ENCODE measurements at regions of chr16 and their contacts with region 1.

Region 1: DNA sequence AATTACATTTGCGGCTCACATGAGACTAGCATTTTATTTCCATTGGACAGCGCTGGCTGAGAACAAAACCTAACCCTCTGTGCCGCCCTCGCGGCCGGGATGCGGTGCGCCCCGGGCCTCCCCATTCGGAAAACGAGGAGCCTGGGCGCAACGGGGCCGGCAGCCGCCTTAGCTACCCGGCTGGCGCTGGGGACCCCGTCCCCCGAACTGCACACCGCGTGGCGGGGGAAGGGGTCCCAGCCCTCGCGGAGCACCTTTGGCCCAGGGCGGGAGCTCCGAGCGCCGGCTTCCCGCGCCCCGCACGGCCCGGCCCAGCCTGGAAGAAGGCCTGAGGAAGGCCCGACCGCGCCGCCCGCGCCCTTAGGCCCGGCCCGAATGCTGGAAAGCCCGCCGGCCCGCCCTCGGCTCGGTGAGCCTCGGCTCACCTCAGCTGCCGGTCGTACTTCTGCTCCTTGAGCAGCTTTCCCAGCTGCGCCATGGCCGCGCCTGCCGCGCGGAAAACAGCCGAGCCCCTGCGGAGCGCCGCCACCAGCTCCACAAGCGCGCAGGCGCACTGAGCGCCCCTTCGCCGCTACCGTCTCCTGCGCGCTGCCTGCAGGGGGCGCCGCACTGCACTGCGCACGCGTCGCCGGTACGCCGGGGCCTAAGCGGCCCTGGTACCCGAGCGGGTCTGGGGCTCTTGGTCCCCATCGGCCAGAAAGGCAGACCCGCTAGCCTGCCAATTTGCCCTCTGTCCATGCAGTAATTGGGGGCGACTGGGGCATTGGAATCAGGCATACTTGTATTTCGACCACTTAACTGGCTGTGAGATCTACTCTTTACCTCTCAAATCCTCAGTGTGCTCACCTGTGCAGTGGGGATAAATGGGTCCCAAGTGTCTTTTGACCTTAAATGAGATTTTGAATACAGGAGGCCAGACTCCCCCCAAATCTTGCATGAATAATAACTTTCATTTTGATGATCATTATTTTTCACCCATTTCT is at the start of gene NAE1:
- DNase-seq: peak; percentile 89 to 94 (median 92)
- H3K4me3 ChIP-seq: peak within 1 kb of the TSS; percentile 60 to 81 (median 76)
- H3K27ac ChIP-seq: peak within 1 kb of the TSS; percentile 40 to 80
- H3K4me1 ChIP-seq: peaks cover 8 to 14% (median 11%) of the 10 kb centered on the region in 4 experiments
- H3K27me3 ChIP-seq: peaks cover 0 to 2% (median 0%) of the 10 kb centered on the region in 5 experiments

Region 2: DNA sequence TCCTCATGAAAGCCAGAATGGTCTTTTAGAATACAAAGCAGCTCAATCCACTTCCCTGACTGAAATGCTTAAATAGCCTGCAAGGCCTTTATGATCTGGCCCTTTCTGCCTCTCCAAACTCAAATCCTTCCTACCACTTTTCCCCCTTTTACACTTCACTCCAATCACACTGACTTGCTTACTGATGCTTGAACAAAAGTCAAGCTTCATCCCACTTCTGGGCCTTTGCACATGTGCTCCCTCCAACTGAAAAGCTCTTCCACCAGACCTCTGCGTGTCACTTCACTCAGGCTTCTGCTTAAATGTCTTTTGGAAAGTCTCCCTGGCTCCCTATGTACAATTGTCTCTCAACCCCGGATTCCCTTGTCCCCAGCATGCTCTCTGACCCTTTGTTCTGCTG is 16.0 kb before region 1 on chr16:
- CTCF ChIA-PET with region 1: interaction called, 13 read pairs
- POLR2A ChIA-PET with region 1: no interaction called
- DNase-seq: no peak
- H3K4me3 ChIP-seq: no peak overlapping the region
- H3K27ac ChIP-seq: no peak overlapping the region
- H3K4me1 ChIP-seq: no peaks in the 10 kb centered on the region
- H3K27me3 ChIP-seq: no peaks in the 10 kb centered on the region

Region 3: DNA sequence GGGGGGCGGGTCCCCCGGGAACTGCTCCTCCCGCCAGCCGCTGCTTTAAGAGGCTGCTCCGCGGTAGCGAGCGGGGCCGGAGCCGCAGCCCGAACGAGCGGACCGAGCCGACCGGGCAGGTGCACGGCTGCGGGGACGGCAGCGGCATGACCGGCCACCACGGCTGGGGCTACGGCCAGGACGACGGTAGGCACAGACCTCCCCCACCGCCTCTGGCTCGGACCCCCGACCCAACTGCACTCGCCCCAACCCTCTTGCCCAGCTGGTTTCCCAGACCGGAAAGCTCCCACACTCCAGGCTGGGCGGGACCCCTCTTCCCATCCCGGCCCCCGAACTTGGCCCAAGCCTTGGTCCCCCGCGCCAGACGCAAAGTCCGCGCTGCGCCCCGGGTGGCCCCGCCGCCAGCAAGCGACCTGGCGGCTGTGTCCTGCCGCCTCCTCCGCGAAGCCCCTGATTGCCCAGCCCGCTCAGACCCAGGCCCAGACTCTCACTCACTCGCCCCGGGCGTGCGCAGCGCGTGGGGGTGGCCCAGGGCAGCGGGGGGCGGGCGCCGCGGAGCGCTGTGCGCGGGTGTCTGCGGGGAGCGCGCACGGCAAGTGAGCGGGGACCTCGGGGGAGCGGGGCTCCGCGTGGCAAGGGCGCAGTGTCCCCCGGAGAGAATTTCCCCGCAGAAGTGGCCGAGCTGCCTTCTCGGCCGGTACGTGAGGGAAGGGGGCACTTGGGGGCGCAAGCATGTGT is 13.8 kb after region 1 on chr16 and contains the start of gene CA7:
- CTCF ChIA-PET with region 1: interaction called, 31 read pairs
- POLR2A ChIA-PET with region 1: interaction called, 3 read pairs
- DNase-seq: peak in 1 of 3 donors; percentile 44
- H3K4me3 ChIP-seq: peak within 1 kb of the TSS in 6 of 7 experiments; percentile 36 to 71 (median 54)
- H3K27ac ChIP-seq: no peak within 1 kb of the TSS
- H3K4me1 ChIP-seq: peaks cover 0 to 14% (median 11%) of the 10 kb centered on the region in 4 experiments
- H3K27me3 ChIP-seq: peaks cover 0 to 43% (median 26%) of the 10 kb centered on the region in 5 experiments

Region 4: GRCh38 chr16:66853261-66854124 is 22.8 kb after region 1 on chr16:
- CTCF ChIA-PET with region 1: interaction called, 10 read pairs
- POLR2A ChIA-PET with region 1: no interaction called
- DNase-seq: peak; percentile 73 to 94 (median 92)
- H3K4me3 ChIP-seq: no peak overlapping the region
- H3K27ac ChIP-seq: no peak overlapping the region
- H3K4me1 ChIP-seq: peaks cover 0 to 13% (median 9%) of the 10 kb centered on the region in 4 experiments
- H3K27me3 ChIP-seq: peaks cover 0 to 9% (median 0%) of the 10 kb centered on the region in 5 experiments

Region 5: DNA sequence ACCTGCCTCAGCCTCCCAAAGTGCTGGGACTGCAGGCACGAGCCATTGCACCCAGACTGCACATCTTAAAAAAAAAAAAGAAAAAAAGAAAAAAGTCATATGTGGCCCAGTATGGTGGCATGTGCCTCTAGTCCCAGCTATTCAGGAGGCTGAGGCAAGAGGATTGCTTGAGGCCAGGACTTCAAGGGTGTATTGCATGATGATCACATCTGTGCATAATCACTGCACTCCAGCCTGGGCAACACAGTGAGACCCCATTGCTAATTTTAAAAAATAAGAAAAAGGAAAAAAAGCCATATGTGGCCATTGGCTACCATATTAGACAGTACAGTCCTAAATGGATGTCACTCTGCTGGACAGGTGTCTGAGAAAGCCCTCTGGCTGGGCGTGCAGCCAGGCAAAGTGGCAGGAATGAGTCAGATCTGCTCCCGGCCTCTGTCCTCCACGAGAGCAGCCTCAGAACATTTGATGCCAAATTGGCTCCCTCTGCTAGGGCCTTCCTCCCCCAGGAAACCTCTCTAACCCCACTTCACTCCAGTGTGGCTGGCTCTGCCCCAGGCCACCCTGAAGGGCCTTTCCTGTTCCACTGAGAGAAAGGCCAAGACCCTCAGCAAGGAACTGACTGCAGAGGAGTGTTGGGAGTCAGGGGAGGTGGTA is 28.2 kb after region 1 on chr16:
- CTCF ChIA-PET with region 1: interaction called, 10 read pairs
- POLR2A ChIA-PET with region 1: no interaction called
- DNase-seq: no peak
- H3K4me3 ChIP-seq: no peak overlapping the region
- H3K27ac ChIP-seq: no peak overlapping the region
- H3K4me1 ChIP-seq: peaks cover 0 to 3% (median under 1%) of the 10 kb centered on the region in 4 experiments
- H3K27me3 ChIP-seq: peaks cover 0 to 6% (median 0%) of the 10 kb centered on the region in 5 experiments

Region 6: GRCh38 chr16:66872943-66873684 is 42.4 kb after region 1 on chr16:
- CTCF ChIA-PET with region 1: interaction called, 91 read pairs
- POLR2A ChIA-PET with region 1: interaction called, 6 read pairs
- DNase-seq: peak; percentile 99 to 100 (median 100)
- H3K4me3 ChIP-seq: peak overlapping the region in 5 of 7 experiments; percentile 32 to 71 (median 45)
- H3K27ac ChIP-seq: peak overlapping the region in 1 of 2 experiments; percentile 40
- H3K4me1 ChIP-seq: peaks cover 0 to 24% (median 14%) of the 10 kb centered on the region in 4 experiments
- H3K27me3 ChIP-seq: no peaks in the 10 kb centered on the region

Region 7: DNA sequence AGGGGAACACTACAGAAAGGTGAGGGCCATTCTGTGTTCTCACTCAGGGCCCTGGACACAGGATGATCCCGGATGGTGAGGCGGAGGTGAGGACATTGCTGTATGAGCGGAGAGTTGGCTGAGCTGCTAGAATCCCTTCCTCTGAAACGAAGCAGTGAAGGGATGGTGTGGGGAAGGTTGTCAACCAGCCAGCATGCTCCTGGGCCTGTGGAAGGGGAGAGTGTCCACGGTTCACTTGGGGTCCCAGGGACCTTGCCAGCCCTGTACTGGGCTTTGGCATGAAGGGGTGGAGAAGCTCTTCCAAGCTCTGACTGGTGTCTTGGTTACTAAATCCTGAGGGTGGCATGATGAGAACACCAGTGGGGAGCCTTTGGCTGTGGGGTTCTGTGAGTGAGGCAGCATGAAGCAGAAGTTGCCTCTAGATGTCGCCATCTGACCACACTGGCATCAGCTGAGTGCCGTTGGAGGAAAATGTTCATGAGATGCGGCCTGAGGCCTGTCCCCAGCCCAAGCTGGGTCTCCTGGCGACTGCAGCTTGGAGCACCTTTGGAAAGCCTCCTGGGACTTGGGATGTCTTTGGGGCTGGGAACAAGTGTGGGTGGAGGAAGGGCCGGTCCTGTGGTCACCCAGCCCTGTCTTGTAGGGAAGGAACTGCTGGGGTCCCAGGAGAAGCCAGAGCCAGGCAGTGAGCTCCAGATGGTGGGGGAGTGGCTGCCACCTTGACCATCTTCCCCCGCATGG is 64.4 kb after region 1 on chr16:
- CTCF ChIA-PET with region 1: no interaction called
- POLR2A ChIA-PET with region 1: no interaction called
- DNase-seq: peak; percentile 75 to 87 (median 81)
- H3K4me3 ChIP-seq: no peak overlapping the region
- H3K27ac ChIP-seq: no peak overlapping the region
- H3K4me1 ChIP-seq: peaks cover 0 to 8% (median 1%) of the 10 kb centered on the region in 4 experiments
- H3K27me3 ChIP-seq: no peaks in the 10 kb centered on the region